Activated CD4-positive, alpha-beta T cell treated with anti-CD3 and anti-CD28 coated beads, Interleukin-2, amount 10 ng/mL, durations not matched to agents 24 days and 14 days (primary cell): ENCODE measurements at regions of chr9 and their contacts with region 1.

Region 1: DNA sequence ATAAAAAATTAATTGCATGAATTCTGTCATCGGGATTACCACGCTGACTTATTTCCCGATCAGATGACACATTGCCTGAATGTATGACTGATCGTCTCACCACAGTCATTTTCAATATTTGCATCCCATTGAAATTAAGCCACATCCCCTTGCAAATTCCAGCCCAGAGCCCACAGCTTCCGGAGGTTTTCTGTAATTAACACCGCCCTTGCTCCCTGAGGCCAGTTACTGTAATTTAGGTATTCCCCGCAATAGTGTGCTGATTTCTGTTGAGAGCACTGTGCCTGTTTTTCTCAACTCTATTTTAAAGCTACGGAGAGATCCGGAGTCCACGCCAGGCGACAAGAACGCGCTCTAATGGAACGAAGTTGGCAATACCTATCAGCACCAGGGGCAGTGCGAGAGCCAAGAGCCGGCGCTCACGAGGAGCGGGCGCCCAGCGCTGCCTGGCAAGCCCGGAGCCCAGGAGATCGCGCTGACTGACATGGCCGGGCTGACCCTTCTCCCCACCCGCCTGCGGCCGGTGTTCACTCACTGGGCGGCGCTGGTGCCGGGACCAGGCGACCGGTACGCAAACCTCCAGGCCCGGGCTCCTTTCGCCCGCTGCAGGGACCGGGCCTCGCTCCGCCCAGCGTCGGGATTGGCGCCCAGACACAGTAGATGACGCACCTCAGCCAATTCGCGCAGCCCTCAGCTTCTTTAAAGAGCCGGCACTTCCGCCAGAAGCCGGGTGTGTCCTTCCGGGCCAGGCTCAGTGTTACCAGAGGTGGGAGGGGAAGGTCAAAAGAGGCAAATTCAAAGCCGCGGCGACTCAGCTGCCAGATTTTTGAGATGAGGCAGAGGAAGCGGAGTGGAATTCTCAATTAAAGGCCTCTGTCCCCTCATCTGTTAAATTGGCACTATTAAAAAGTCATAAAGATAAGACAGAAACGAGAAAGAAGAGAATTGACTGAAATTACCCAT is at the start of gene PLGRKT:
- DNase-seq: peak; percentile 97
- H3K4me3 Mint-ChIP-seq: peak within 1 kb of the TSS; percentile 93
- H3K27ac Mint-ChIP-seq: peak within 1 kb of the TSS; percentile 97
- H3K4me1 Mint-ChIP-seq: peaks cover 52% of the 10 kb centered on the region
- H3K27me3 Mint-ChIP-seq: no peaks in the 10 kb centered on the region
- total RNA-seq, gene PLGRKT: 53.0 and 54.4 TPM in 2 replicates

Region 2: DNA sequence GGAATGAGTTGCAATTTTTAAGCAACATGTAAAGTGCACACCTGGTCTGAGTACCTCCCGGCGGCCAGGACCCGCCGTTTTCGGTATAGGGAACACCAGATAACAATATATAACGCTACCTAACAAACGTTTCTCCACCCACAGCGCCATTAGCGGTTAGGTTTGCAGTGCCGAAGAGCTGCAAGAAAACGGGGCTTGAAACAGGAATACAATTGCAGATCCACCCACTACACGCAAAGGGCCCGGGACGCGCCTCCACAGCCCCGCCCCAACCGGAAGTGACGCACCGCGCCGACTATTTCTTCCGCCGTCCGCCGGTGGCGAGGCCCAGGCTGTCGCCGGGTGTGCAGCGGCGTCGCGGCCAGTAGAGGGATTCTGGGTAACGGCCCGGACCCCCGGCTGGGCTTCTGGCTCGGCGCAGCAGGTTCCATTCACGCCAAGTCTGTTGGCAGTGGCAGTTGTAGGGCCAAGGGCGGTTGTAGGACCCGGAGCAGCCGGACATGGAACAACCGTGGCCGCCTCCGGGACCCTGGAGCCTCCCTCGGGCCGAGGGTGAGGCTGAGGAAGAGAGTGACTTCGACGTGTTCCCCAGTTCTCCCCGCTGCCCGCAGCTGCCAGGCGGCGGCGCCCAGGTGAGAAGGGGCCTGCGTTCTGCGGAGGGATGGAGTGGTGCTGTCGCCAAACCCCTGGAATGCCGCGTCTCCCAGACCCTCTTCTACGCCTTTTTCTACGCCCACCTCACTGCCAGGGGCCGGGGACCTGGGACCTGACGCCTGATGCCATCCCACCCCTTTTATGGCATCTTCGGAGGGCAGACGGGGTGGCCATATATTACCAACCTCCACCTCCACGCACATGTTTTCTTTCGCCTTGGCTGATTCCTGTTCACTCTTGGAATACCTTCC is 758.0 kb before region 1 on chr9 and contains the start of gene CDC37L1:
- intact Hi-C with region 1: loop called (anchors 5 kb)
- DNase-seq: peak; percentile 100
- H3K4me3 Mint-ChIP-seq: no peak within 1 kb of the TSS
- H3K27ac Mint-ChIP-seq: no peak within 1 kb of the TSS
- H3K4me1 Mint-ChIP-seq: peaks cover 7% of the 10 kb centered on the region
- H3K27me3 Mint-ChIP-seq: no peaks in the 10 kb centered on the region
- total RNA-seq, gene CDC37L1: 11.3 and 12.1 TPM in 2 replicates

Region 3: GRCh38 chr9:5073701-5074100 is 363.8 kb before region 1 on chr9:
- intact Hi-C with region 1: loop called (anchors 10 kb)
- DNase-seq: no peak
- H3K4me3 Mint-ChIP-seq: no peak overlapping the region
- H3K27ac Mint-ChIP-seq: peak overlapping the region; percentile 11
- H3K4me1 Mint-ChIP-seq: peaks cover 17% of the 10 kb centered on the region
- H3K27me3 Mint-ChIP-seq: no peaks in the 10 kb centered on the region

Region 4: GRCh38 chr9:5450359-5451091 is 13.0 kb after region 1 on chr9 and contains the start of gene CD274:
- intact Hi-C with region 1: loop called (anchors 1 kb)
- DNase-seq: peak; percentile 95
- H3K4me3 Mint-ChIP-seq: peak within 1 kb of the TSS; percentile 90
- H3K27ac Mint-ChIP-seq: peak within 1 kb of the TSS; percentile 90
- H3K4me1 Mint-ChIP-seq: peaks cover 56% of the 10 kb centered on the region
- H3K27me3 Mint-ChIP-seq: no peaks in the 10 kb centered on the region
- total RNA-seq, gene CD274: 52.1 and 57.6 TPM in 2 replicates

Region 5: DNA sequence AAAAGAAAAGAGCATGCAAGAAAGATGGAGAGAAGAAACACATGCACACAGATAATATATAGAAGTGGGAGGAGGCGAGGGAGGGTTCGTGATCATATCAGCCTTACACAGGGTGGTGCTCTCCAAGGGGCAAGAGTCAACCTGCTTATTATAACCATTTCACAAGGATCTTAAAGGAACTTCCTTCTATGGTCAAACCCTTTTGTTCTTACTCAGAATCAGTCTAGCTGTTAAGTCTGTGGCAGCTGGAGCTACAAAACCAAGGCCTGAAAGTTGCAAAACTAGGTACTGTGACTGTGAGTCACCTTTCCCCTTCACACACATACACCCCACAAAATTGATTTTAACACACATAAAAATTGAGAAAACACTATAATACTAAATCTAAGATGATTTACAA is 413.9 kb after region 1 on chr9:
- intact Hi-C with region 1: loop called (anchors 5 kb)
- DNase-seq: peak; percentile 84
- H3K4me3 Mint-ChIP-seq: peak overlapping the region; percentile 48
- H3K27ac Mint-ChIP-seq: peak overlapping the region; percentile 67
- H3K4me1 Mint-ChIP-seq: peaks cover 55% of the 10 kb centered on the region
- H3K27me3 Mint-ChIP-seq: no peaks in the 10 kb centered on the region